HepG2 (cell line): ENCODE measurements at regions of chr12 and their contacts with region 1.

Region 1: GRCh38 chr12:108664338-108665258 is 30.9 kb upstream of the SELPLG start:
- DNase-seq: peak; percentile 92
- ATAC-seq: peak; percentile 86
- H3K4me3 ChIP-seq: peak overlapping the region in 1 of 3 experiments; percentile 8; a peak in 1 of 6 replicates
- H3K27ac ChIP-seq: peak overlapping the region; percentile 73
- H3K4me1 ChIP-seq: peaks cover 54% of the 10 kb centered on the region
- H3K27me3 ChIP-seq: no peaks in the 10 kb centered on the region
- CTCF ChIP-seq: peak; percentile 95
- EP300 ChIP-seq: peak in 1 of 2 experiments; percentile 82; a peak in 2 of 4 replicates
- POLR2A ChIP-seq: no peak
- RAD21 ChIP-seq: peak; percentile 90

Region 2: DNA sequence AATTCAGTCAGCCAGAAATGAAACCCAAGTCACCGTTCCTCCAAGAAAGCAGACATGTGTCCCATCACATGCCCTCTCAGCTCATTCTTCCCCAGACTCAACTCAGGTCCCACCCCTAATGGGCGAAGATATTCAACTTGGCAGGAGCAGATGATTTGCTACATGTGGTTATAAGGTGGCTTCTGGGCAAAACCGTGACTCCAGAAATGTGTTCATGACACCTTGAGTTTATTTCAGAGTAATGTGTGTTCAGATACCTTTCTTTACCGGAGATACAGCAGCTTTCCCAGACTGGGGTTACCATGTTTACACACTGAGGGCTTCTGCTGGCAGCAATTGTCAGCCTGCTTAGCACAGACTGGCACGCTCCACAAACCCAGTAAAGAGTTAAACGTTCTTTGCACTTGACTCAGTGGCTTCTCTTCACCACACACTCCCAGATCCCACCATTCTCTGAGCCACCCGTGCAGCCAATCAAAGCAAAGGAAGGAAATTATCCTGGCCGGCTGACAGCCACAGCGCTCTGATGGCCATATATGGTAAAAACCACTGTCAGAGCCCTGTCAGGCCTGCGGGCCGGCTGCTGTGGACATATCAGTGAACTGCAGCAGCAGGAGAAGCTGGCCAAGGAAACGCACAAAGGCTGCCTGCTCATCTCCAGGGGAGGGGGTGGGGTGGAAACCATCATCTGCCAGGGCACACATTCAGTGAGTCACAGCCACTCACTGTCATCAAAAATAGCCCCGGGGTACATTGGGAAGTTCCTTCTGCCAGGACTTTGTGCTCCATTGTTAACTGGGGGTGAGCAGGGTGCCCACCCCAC is 26.8 kb after region 1 on chr12:
- CTCF ChIA-PET with region 1: interaction called, 3 read pairs
- POLR2A ChIA-PET with region 1: interaction called, 11 read pairs
- in situ Hi-C with region 1: no loop called
- intact Hi-C with region 1: loop called (anchors 2 kb)
- DNase-seq: peak; percentile 96
- ATAC-seq: peak; percentile 97
- H3K4me3 ChIP-seq: peak overlapping the region in 2 of 3 experiments; percentile 22 to 49; a peak in 3 of 6 replicates
- H3K27ac ChIP-seq: peak overlapping the region; percentile 86
- H3K4me1 ChIP-seq: peaks cover 55% of the 10 kb centered on the region
- H3K27me3 ChIP-seq: no peaks in the 10 kb centered on the region
- CTCF ChIP-seq: peak; percentile 29; the same call in 1 of the 2 replicates
- EP300 ChIP-seq: peak; percentile 37 to 51; a peak in 2 of 4 replicates
- POLR2A ChIP-seq: peak in 1 of 2 experiments; percentile 73; a peak in 2 of 4 replicates
- RAD21 ChIP-seq: no peak

Region 3: DNA sequence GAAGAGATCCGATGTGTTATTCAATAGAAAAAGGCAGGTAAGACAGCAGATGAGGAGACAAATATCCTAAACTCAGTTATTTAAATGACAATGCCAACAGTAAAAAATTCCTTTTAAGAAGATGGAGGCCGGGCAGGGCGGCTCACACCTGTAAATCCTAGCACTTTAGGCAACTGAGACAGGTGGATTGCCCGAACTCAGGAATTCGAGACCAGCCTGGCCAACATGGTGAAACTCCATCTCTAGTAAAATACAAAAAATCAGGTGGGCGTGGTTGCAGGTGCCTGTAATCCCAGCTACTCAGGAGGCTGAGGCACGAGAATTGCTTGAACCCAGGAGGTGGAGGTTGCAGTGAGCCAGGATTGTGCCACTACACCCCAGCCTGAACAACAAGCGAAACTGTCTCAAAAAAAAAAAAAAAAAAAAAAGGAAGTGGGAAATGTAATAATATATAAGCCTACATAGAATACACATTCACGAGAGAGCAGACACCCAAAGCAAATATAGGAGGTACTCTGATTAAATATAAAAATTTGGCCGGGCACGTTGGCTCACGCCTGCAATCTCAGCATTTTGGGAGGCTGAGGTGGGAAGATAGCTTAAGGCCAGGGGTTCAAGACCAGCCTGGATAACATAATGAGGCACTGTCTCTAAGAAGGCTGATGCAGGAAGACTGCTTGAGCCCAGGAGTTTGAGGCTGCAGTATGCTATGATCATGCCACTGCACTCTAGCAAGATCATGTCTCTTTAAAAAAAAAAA is 47.7 kb after region 1 on chr12:
- CTCF ChIA-PET with region 1: no interaction called
- POLR2A ChIA-PET with region 1: no interaction called
- in situ Hi-C with region 1: no loop called
- intact Hi-C with region 1: no loop called
- DNase-seq: no peak
- ATAC-seq: no peak
- H3K4me3 ChIP-seq: no peak overlapping the region
- H3K27ac ChIP-seq: no peak overlapping the region
- H3K4me1 ChIP-seq: peaks cover 6% of the 10 kb centered on the region; the same call in 1 of the 2 replicates
- H3K27me3 ChIP-seq: no peaks in the 10 kb centered on the region
- CTCF ChIP-seq: no peak
- EP300 ChIP-seq: no peak
- POLR2A ChIP-seq: no peak
- RAD21 ChIP-seq: no peak

Region 4: DNA sequence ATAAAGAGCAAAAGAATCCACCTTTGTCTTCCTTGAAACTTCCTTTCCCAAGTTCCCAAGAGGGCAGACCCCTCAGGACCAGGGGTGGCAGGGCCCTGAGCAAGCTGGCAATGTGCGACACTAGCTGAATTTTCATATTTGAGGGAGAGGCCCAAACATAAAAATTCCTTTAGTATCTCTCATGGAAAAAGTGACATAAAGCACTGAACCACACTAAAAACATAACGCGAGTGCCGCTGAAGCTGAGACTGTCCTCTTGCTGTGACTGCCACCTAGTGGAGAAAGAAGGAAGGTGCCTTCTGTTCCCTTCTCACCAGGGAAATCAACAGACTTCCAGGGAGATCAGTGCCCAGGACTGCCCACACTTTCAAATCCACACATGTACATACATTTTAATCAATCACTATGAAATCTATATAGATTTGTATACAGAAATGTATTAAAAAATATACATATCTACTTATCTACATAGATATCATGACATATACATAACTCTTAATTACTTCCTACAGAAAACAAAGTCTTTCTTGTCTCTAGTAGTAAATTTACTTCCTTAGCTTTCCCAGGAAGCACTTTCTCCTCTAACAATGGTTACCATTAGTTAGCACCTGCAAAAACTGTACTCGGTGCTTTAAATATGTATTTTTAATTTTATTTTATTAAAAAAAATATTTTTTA is 139.0 kb after region 1 on chr12:
- CTCF ChIA-PET with region 1: interaction called, 53 read pairs
- POLR2A ChIA-PET with region 1: interaction called, 14 read pairs
- in situ Hi-C with region 1: loop called (anchors 5 kb)
- intact Hi-C with region 1: loop called (anchors 1 kb)
- DNase-seq: peak; percentile 75
- ATAC-seq: peak; percentile 89
- H3K4me3 ChIP-seq: no peak overlapping the region
- H3K27ac ChIP-seq: peak overlapping the region; percentile 25
- H3K4me1 ChIP-seq: peaks cover 6% of the 10 kb centered on the region; the same call in 1 of the 2 replicates
- H3K27me3 ChIP-seq: no peaks in the 10 kb centered on the region
- CTCF ChIP-seq: peak; percentile 94
- EP300 ChIP-seq: no peak
- POLR2A ChIP-seq: no peak
- RAD21 ChIP-seq: peak; percentile 91

Region 5: GRCh38 chr12:109093022-109093918 is 428.7 kb after region 1 on chr12 and contains the start of gene ALKBH2:
- CTCF ChIA-PET with region 1: no interaction called
- POLR2A ChIA-PET with region 1: no interaction called
- in situ Hi-C with region 1: no loop called
- intact Hi-C with region 1: loop called (anchors 10 kb)
- DNase-seq: peak; percentile 85
- ATAC-seq: peak; percentile 57
- H3K4me3 ChIP-seq: peak within 1 kb of the TSS; percentile 25 to 66 (median 37)
- H3K27ac ChIP-seq: peak within 1 kb of the TSS; percentile 52
- H3K4me1 ChIP-seq: peaks cover 59% of the 10 kb centered on the region
- H3K27me3 ChIP-seq: no peaks in the 10 kb centered on the region
- CTCF ChIP-seq: peak; percentile 100
- EP300 ChIP-seq: no peak; a peak in 1 of 4 replicates
- POLR2A ChIP-seq: peak; percentile 86 to 92
- RAD21 ChIP-seq: peak; percentile 100
- total RNA-seq, gene ALKBH2: 40.5 and 46.7 TPM in 2 replicates